Posterior vena cava (tissue), 2 donors: ENCODE measurements at regions of chr5 and their contacts with region 1.

Region 1: GRCh38 chr5:142472300-142472951 is 147.6 kb upstream of the SPRY4 start:
- DNase-seq: no peak

Region 2: GRCh38 chr5:142412581-142412980 is 59.8 kb before region 1 on chr5:
- intact Hi-C with region 1: loop called in 1 of 2 experiments (anchors 10 kb)
- DNase-seq: no peak